Endothelial cell of umbilical vein (primary cell): ENCODE measurements at regions of chr1 and their contacts with region 1.

Region 1: DNA sequence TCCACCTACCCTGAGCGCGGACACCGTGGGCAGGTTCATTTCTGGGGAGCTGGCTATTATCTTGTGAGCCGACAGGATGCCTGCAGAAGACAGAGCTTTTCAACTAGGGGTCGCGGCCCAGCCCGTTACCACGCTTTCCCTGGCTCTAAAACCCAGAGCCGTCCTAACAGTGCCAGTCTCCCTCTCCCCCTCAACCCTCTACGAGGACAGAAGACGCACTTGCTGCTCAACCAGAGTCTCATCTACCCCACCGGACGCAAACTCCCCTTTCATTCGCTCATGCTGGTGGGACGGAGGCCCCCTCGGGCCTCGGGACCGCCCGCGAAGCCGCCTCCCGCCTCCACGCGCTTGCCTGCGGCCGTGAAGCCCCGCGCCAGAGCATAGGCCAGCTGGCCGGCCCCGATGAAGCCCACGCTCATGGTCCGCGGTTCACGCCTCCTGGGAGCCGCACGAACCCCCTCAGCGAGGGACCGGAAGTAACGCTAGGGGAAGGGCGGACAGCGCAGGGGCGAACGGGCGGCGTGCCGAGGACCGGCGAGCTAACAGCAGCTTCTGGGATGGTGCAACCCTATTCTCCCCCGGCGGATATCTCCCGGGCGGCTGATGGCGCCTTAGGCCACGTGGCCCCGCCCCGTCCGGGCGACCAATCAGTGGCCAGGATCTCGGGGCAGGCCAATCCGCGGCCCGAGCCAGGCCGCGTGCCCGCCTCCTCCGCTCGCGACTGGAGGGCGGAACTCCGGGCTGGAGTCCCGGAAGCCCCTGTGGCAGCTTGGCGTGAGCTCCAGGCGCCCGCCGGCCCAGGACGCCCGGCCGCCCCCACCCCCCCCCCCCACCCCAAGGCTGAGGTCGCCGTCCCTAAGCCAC is at the start of gene PYCR2:
- DNase-seq: peak; percentile 97
- H3K4me3 ChIP-seq: peak within 1 kb of the TSS; percentile 15 to 69 (median 59)
- H3K27ac ChIP-seq: peak within 1 kb of the TSS; percentile 69
- H3K4me1 ChIP-seq: peaks cover 19% of the 10 kb centered on the region
- H3K27me3 ChIP-seq: no peaks in the 10 kb centered on the region
- CTCF ChIP-seq: no peak
- POLR2A ChIP-seq: peak; percentile 94
- total RNA-seq, gene PYCR2: 60.4 and 64.6 TPM in 2 replicates

Region 2: GRCh38 chr1:225881969-225882693 is 41.8 kb before region 1 on chr1 and contains the start of gene TMEM63A:
- CTCF ChIA-PET with region 1: interaction called, 4 read pairs
- POLR2A ChIA-PET with region 1: interaction called, 4 read pairs
- dilution Hi-C with region 1: no loop called
- intact Hi-C with region 1: loop called (anchors 1 kb)
- DNase-seq: peak; percentile 86
- H3K4me3 ChIP-seq: peak within 1 kb of the TSS; percentile 70 to 91 (median 81)
- H3K27ac ChIP-seq: peak within 1 kb of the TSS; percentile 38
- H3K4me1 ChIP-seq: peaks cover 14% of the 10 kb centered on the region
- H3K27me3 ChIP-seq: no peaks in the 10 kb centered on the region
- CTCF ChIP-seq: peak; percentile 16 to 37
- POLR2A ChIP-seq: no peak
- total RNA-seq, gene TMEM63A: 40.8 and 41.4 TPM in 2 replicates

Region 3: DNA sequence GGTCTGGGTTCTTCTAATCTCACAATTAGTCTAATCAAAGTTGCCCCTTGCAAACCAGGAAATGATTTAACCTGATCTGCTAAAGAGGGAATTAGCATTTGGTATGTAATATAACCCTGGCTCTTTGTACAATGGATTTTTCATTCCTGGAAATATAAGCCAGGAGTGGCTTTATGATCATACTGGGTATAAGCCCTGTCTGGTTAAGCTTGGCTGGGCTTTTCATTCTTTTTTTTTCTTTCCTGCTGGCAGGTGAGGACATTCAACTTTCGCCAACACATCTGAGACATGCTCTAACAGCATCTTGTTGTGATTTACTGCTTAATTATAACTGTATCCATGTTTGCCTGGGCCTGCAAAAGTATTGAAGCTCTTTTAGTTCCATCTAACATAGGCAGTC is 95.6 kb after region 1 on chr1:
- CTCF ChIA-PET with region 1: no interaction called
- POLR2A ChIA-PET with region 1: no interaction called
- dilution Hi-C with region 1: no loop called
- intact Hi-C with region 1: no loop called
- DNase-seq: no peak
- H3K4me3 ChIP-seq: no peak overlapping the region
- H3K27ac ChIP-seq: no peak overlapping the region
- H3K4me1 ChIP-seq: no peaks in the 10 kb centered on the region
- H3K27me3 ChIP-seq: peaks cover 3 to 5% of the 10 kb centered on the region in 2 experiments
- CTCF ChIP-seq: no peak
- POLR2A ChIP-seq: no peak